Activated CD4-positive, alpha-beta T cell treated with anti-CD3 and anti-CD28 coated beads, Interleukin-2, amount 10 ng/mL, durations not matched to agents 24 days and 14 days (primary cell): ENCODE measurements at regions of chr11 and their contacts with region 1.

Region 1: DNA sequence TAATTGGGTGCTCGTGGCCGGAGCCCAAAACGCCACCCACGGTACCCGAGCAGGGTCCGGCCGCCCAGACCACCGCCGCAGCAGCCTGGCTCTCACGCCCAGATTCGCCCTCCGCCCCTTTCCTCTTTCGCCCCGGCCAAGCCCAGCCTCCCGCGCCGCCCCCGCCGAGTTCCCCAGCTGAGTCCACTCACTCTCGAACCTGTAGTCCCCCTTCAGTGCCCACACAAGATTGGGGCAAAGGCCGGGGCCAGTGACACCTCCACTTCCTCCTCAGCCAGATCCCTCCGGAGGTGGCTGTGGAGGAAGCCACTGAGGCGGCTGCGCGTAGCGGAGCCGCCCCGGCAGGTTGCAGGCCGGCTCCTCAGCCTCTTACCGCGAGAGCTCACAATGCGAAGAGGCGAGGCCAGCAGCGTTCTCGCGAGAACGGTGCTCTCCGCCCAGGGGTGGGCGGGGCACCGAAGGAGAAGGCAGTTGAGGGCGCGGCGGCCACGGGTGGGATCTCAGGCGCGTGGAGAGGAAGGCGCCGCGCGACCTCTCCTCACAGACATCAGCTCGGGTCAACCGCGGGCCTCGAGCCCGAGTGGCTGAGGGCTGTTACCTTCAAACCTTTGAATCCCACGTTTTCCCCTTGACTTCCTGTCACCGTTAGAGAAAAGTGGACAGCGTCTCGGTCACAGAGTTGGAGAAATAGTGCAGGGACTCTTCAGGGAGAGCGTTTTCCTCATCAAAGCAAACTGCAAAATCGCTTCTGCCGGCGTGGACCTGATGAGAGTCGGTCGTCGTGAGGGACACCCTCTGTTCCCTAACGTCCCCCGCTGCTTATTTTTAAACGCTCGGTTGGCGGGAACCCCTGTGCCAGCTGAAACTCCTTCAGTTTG is at the start of gene BTBD10:
- DNase-seq: peak; percentile 98
- H3K4me3 Mint-ChIP-seq: peak within 1 kb of the TSS; percentile 98
- H3K27ac Mint-ChIP-seq: peak within 1 kb of the TSS; percentile 97
- H3K4me1 Mint-ChIP-seq: peaks cover 30% of the 10 kb centered on the region
- H3K27me3 Mint-ChIP-seq: no peaks in the 10 kb centered on the region
- total RNA-seq, gene BTBD10: 20.3 and 21.8 TPM in 2 replicates

Region 2: DNA sequence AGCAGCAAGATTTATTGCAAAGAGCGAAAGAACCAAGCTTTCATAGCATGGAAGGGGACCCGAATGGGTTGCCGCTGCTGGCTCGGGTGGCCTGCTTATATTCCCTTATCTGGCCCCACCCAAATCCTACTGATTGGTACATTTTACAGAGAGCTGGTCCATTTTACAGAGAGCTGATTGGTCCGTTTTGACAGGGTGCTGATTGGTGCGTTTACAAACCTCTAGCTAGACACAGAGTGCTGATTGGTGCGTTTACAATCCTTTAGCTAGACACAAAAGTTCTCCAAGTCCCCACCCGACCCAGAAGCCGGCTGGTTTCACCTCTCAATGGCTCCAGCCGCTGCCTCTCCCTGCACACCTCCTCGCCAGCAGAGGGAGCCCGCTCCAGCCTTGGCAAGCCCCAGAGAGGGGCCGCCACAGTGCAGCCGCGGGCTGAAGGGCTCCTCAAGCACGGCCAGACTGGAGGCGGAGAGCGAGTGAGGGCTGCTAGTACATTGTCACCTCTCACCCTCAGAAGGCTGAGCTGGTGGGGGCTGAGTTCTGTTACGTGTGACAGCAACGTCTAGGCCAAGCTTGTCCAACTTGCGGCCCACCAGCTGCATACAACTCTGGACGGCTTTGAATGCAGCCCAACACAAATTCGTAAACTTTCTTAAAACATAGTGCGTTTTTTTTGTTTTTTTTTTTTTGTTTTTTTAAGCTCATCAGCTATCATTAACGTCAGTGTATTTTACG is 24.0 kb after region 1 on chr11:
- intact Hi-C with region 1: no loop called
- DNase-seq: peak; percentile 85
- H3K4me3 Mint-ChIP-seq: peak overlapping the region; percentile 63
- H3K27ac Mint-ChIP-seq: no peak overlapping the region
- H3K4me1 Mint-ChIP-seq: no peaks in the 10 kb centered on the region
- H3K27me3 Mint-ChIP-seq: peaks cover 13% of the 10 kb centered on the region

Region 3: DNA sequence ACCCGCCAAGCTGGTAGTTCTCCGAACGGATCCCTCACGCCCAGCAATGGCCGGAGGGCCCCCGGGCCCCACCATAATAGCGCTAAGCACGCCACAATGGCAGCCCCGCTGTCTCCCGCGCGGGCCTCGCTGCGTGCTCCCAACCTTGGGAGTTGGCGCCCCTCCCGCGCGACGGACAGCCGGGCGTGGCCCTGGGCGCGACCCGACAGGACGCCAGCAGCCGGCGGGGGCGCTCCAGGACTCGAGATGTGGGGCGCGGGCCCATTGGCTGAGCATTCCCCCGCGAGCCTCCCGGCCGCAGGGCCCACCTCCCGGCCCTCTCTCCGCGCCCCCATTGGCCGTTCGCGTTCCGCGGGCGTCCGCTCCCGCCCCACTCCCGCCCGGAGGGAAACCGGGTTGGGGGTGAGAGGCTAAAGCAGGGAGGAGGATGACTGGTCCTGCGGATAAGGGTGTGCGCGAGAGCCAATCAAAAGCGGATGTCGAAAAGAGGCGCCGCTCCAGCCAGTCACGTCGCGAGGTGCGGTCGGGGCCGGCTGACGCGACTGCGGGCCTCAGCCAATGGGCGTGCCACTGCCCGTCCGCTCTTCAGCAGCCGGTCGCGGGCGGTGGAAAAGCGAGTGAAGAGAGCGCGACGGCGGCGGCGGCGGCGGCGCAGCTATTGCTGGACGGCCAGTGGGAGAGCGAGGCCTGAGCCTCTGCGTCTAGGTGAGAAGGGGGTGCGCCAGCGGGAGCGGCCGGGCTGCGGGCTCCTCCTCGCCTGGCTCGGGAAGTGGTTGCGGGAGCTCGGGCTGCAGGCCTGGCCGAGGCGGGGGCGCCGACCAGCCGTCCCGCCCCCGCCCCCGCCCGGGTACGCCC is 205.2 kb after region 1 on chr11 and contains the start of gene FAR1:
- intact Hi-C with region 1: loop called (anchors 1 kb)
- DNase-seq: peak; percentile 99
- H3K4me3 Mint-ChIP-seq: peak within 1 kb of the TSS; percentile 98
- H3K27ac Mint-ChIP-seq: peak within 1 kb of the TSS; percentile 97
- H3K4me1 Mint-ChIP-seq: peaks cover 36% of the 10 kb centered on the region
- H3K27me3 Mint-ChIP-seq: peaks cover 10% of the 10 kb centered on the region
- total RNA-seq, gene FAR1: 55.7 and 58.2 TPM in 2 replicates